CD4-positive, alpha-beta memory T cell (primary cell): ENCODE measurements at regions of chr3 and their contacts with region 1.

Region 1: GRCh38 chr3:10248184-10249080 is at the start of gene TATDN2:
- DNase-seq: peak; percentile 89 to 93 (median 92)
- H3K4me3 ChIP-seq: peak within 1 kb of the TSS; percentile 23 to 99
- H3K4me3 Mint-ChIP-seq: peak within 1 kb of the TSS; percentile 97 to 99 (median 99)
- H3K27ac ChIP-seq: peak within 1 kb of the TSS; percentile 78
- H3K27ac Mint-ChIP-seq: peak within 1 kb of the TSS; percentile 95 to 98 (median 97)
- H3K4me1 ChIP-seq: peaks cover 49% of the 10 kb centered on the region
- H3K4me1 Mint-ChIP-seq: peaks cover 35 to 65% (median 54%) of the 10 kb centered on the region in 4 donors
- H3K27me3 ChIP-seq: no peaks in the 10 kb centered on the region
- H3K27me3 Mint-ChIP-seq: no peaks in the 10 kb centered on the region
- total RNA-seq, gene TATDN2: 76.1 to 79.3 TPM

Region 2: GRCh38 chr3:10115326-10116137 is 132.9 kb before region 1 on chr3 and contains the start of gene BRK1:
- CTCF ChIA-PET with region 1: interaction called, 5 read pairs
- POLR2A ChIA-PET with region 1: no interaction called
- intact Hi-C with region 1: loop called (anchors 1 kb)
- DNase-seq: peak; percentile 89 to 95 (median 93)
- H3K4me3 ChIP-seq: peak within 1 kb of the TSS; percentile 89 to 98
- H3K4me3 Mint-ChIP-seq: peak within 1 kb of the TSS; percentile 95 to 100 (median 99)
- H3K27ac ChIP-seq: peak within 1 kb of the TSS; percentile 84
- H3K27ac Mint-ChIP-seq: peak within 1 kb of the TSS; percentile 96 to 100 (median 98)
- H3K4me1 ChIP-seq: peaks cover 39% of the 10 kb centered on the region
- H3K4me1 Mint-ChIP-seq: peaks cover 22 to 52% (median 31%) of the 10 kb centered on the region in 4 donors
- H3K27me3 ChIP-seq: no peaks in the 10 kb centered on the region
- H3K27me3 Mint-ChIP-seq: peaks cover 0 to 1% of the 10 kb centered on the region in 2 donors
- total RNA-seq, gene BRK1: 73.0 to 78.1 TPM

Region 3: DNA sequence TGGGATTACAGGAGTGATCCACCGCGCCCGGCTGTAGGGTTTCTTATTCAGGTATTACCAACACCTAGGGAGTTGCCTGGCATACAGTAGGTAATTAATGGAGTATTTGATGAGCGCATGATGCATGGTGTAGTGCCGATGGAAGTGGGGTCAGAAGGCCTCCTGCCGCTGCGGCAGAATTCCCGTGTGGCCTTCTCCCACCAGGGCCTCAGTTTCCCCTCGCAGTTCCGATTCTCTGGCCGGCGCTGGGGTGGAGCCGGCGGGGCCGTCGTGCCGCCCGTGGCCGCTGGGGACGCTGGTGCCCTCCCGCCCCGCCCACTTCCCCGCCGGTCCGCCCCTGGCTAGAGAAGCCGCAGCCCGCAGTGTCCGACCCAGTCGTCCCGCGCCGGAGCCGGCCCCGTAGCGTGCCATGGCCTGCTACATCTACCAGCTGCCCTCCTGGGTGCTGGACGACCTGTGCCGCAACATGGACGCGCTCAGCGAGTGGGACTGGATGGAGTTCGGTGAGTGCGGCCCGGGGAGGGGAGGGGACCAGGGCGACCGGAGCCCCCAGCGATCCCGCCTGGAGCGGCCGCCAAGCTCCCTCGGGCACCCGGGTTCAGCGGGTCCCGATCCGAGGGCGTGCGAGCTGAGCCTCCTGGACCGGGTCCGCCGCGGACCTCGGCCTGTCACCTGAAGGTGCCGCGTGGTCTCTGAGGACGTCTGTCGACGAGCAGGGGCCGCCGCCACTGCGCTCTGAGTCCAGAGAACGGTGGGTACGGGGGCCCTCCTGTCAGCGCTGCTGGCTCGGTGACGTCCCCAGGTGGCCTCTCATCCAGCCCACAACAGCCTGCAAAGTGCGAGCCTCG is 83.7 kb before region 1 on chr3 and contains the start of gene IRAK2:
- CTCF ChIA-PET with region 1: interaction called, 3 read pairs
- POLR2A ChIA-PET with region 1: interaction called, 11 read pairs
- intact Hi-C with region 1: no loop called
- DNase-seq: peak; percentile 54 to 67 (median 59)
- H3K4me3 ChIP-seq: peak within 1 kb of the TSS; percentile 23 to 74
- H3K4me3 Mint-ChIP-seq: peak within 1 kb of the TSS; percentile 87 to 96 (median 90)
- H3K27ac ChIP-seq: peak within 1 kb of the TSS; percentile 74
- H3K27ac Mint-ChIP-seq: peak within 1 kb of the TSS; percentile 29 to 93 (median 81)
- H3K4me1 ChIP-seq: peaks cover 16% of the 10 kb centered on the region
- H3K4me1 Mint-ChIP-seq: peaks cover 12 to 32% (median 25%) of the 10 kb centered on the region in 4 donors
- H3K27me3 ChIP-seq: no peaks in the 10 kb centered on the region
- H3K27me3 Mint-ChIP-seq: no peaks in the 10 kb centered on the region
- total RNA-seq, gene IRAK2: 4.8 to 5.3 TPM

Region 4: GRCh38 chr3:10198761-10199649 is 49.4 kb before region 1 on chr3:
- CTCF ChIA-PET with region 1: interaction called, 3 read pairs
- POLR2A ChIA-PET with region 1: interaction called, 25 read pairs
- intact Hi-C with region 1: loop called (anchors 2 kb)
- DNase-seq: peak; percentile 76 to 95 (median 80)
- H3K4me3 ChIP-seq: peak overlapping the region; percentile 2 to 21
- H3K4me3 Mint-ChIP-seq: peak overlapping the region in 7 of 8 donors; percentile 55 to 79 (median 73)
- H3K27ac ChIP-seq: peak overlapping the region; percentile 88
- H3K27ac Mint-ChIP-seq: peak overlapping the region; percentile 95 to 99 (median 97)
- H3K4me1 ChIP-seq: peaks cover 84% of the 10 kb centered on the region
- H3K4me1 Mint-ChIP-seq: peaks cover 42 to 81% (median 63%) of the 10 kb centered on the region in 4 donors
- H3K27me3 ChIP-seq: no peaks in the 10 kb centered on the region
- H3K27me3 Mint-ChIP-seq: no peaks in the 10 kb centered on the region

Region 5: GRCh38 chr3:10286596-10287330 is 38.3 kb after region 1 on chr3:
- CTCF ChIA-PET with region 1: no interaction called
- POLR2A ChIA-PET with region 1: interaction called, 3 read pairs
- intact Hi-C with region 1: loop called (anchors 2 kb)
- DNase-seq: peak in 3 of 5 donors; percentile 66 to 72 (median 66)
- H3K4me3 ChIP-seq: no peak overlapping the region
- H3K4me3 Mint-ChIP-seq: no peak overlapping the region
- H3K27ac ChIP-seq: no peak overlapping the region
- H3K27ac Mint-ChIP-seq: peak overlapping the region; percentile 2 to 57 (median 43)
- H3K4me1 ChIP-seq: peaks cover 23% of the 10 kb centered on the region
- H3K4me1 Mint-ChIP-seq: peaks cover 26 to 45% (median 29%) of the 10 kb centered on the region in 4 donors
- H3K27me3 ChIP-seq: no peaks in the 10 kb centered on the region
- H3K27me3 Mint-ChIP-seq: no peaks in the 10 kb centered on the region

Region 6: DNA sequence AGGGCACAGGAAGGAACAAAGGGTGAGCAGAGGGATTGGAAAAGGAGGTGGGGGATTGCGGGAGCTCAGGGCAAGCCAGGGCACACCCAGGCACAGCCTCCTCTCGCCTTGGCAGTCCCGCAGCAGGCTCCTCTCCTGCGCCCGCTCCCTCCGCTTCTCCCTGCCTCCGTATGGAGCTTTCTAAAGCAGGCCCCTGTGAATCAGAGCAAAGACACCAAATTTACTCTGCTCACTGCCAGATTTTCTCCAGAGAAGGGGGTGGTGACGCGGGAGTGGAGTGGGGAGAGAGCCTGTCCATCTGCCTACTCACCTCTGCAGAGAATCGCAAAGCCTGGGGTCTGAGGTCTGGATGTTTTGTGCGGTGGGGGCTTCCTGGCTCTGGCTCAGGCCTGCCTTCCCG is 236.9 kb after region 1 on chr3:
- CTCF ChIA-PET with region 1: no interaction called
- POLR2A ChIA-PET with region 1: no interaction called
- intact Hi-C with region 1: no loop called
- DNase-seq: no peak
- H3K4me3 ChIP-seq: no peak overlapping the region
- H3K4me3 Mint-ChIP-seq: no peak overlapping the region
- H3K27ac ChIP-seq: no peak overlapping the region
- H3K27ac Mint-ChIP-seq: no peak overlapping the region
- H3K4me1 ChIP-seq: no peaks in the 10 kb centered on the region
- H3K4me1 Mint-ChIP-seq: no peaks in the 10 kb centered on the region
- H3K27me3 ChIP-seq: no peaks in the 10 kb centered on the region
- H3K27me3 Mint-ChIP-seq: peaks cover 2% of the 10 kb centered on the region in 2 donors